CD4-positive, alpha-beta T cell (primary cell): ENCODE measurements at regions of chr6 and their contacts with region 1.

Region 1: GRCh38 chr6:3356056-3356761 is 97.5 kb downstream of the PSMG4 start:
- DNase-seq: peak; percentile 36 to 87 (median 58)
- ATAC-seq: peak; percentile 78
- H3K4me3 ChIP-seq: peak overlapping the region; percentile 50
- H3K4me3 Mint-ChIP-seq: peak overlapping the region; percentile 85
- H3K27ac ChIP-seq: peak overlapping the region; percentile 67 to 71
- H3K27ac Mint-ChIP-seq: peak overlapping the region; percentile 94
- H3K4me1 ChIP-seq: peaks cover 33% of the 10 kb centered on the region
- H3K4me1 Mint-ChIP-seq: peaks cover 47% of the 10 kb centered on the region
- H3K27me3 ChIP-seq: no peaks in the 10 kb centered on the region
- H3K27me3 Mint-ChIP-seq: no peaks in the 10 kb centered on the region
- CTCF ChIP-seq: no peak

Region 2: GRCh38 chr6:2245094-2245876 is 1110.9 kb before region 1 on chr6 and contains the start of gene GMDS:
- CTCF ChIA-PET with region 1: no interaction called
- POLR2A ChIA-PET with region 1: no interaction called
- intact Hi-C with region 1: loop called in 1 of 2 experiments (anchors 10 kb)
- DNase-seq: peak; percentile 60 to 95 (median 78)
- ATAC-seq: peak; percentile 88
- H3K4me3 ChIP-seq: peak within 1 kb of the TSS; percentile 97
- H3K4me3 Mint-ChIP-seq: peak within 1 kb of the TSS; percentile 94
- H3K27ac ChIP-seq: peak within 1 kb of the TSS; percentile 50 to 88
- H3K27ac Mint-ChIP-seq: peak within 1 kb of the TSS; percentile 96
- H3K4me1 ChIP-seq: peaks cover 29% of the 10 kb centered on the region
- H3K4me1 Mint-ChIP-seq: peaks cover 69% of the 10 kb centered on the region
- H3K27me3 ChIP-seq: no peaks in the 10 kb centered on the region
- H3K27me3 Mint-ChIP-seq: no peaks in the 10 kb centered on the region
- CTCF ChIP-seq: no peak
- total RNA-seq, gene GMDS: 13.9 to 16.4 TPM

Region 3: DNA sequence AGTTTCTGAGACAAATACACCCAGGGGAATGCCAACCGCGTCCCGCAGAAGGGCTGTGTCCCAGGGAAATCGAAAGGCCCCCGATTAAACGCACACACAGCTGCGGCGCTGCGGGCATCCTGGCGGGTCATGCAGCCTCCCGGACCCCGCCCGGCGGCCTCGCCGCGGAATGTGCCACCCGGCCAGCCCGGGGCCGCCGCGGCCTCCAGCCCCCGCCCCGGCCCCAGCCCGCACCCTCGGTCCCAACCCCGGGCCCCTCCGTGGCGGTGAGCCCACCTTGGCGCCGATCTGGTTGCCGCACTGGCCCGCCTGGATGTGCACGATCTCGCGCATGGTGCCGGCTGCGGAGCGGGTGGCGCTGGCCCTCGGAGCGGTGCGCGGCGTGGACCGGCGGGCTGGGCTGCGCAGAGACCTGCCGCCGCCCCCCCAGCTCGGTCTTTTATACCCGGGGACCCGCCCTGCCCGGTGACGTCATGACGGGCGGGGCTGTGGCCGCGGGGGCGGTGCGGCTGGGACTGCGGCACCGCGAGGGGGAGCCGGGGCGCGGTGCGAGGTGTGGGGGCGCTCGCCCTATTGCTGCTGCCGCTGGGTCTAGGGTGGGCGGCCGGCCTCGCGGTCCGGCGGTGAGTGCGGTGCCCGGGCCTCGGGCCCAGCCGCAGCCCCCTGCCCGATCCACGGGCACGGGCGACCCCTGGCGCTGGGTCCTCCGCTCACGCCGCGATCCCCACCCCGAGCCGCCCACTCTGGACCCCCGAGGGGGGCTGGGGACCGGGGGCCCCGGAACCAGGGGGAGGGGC is 198.9 kb before region 1 on chr6 and contains the start of gene TUBB2A:
- CTCF ChIA-PET with region 1: no interaction called
- POLR2A ChIA-PET with region 1: no interaction called
- intact Hi-C with region 1: loop called in 1 of 2 experiments (anchors 5 kb)
- DNase-seq: peak; percentile 79 to 94 (median 87)
- ATAC-seq: peak; percentile 62
- H3K4me3 ChIP-seq: peak within 1 kb of the TSS; percentile 75
- H3K4me3 Mint-ChIP-seq: peak within 1 kb of the TSS; percentile 91
- H3K27ac ChIP-seq: peak within 1 kb of the TSS; percentile 52 to 59
- H3K27ac Mint-ChIP-seq: peak within 1 kb of the TSS; percentile 87
- H3K4me1 ChIP-seq: peaks cover 46% of the 10 kb centered on the region
- H3K4me1 Mint-ChIP-seq: peaks cover 41% of the 10 kb centered on the region
- H3K27me3 ChIP-seq: no peaks in the 10 kb centered on the region
- H3K27me3 Mint-ChIP-seq: peaks cover 4% of the 10 kb centered on the region
- CTCF ChIP-seq: peak; percentile 42
- total RNA-seq, gene TUBB2A: 54.3 to 58.5 TPM

Region 4: DNA sequence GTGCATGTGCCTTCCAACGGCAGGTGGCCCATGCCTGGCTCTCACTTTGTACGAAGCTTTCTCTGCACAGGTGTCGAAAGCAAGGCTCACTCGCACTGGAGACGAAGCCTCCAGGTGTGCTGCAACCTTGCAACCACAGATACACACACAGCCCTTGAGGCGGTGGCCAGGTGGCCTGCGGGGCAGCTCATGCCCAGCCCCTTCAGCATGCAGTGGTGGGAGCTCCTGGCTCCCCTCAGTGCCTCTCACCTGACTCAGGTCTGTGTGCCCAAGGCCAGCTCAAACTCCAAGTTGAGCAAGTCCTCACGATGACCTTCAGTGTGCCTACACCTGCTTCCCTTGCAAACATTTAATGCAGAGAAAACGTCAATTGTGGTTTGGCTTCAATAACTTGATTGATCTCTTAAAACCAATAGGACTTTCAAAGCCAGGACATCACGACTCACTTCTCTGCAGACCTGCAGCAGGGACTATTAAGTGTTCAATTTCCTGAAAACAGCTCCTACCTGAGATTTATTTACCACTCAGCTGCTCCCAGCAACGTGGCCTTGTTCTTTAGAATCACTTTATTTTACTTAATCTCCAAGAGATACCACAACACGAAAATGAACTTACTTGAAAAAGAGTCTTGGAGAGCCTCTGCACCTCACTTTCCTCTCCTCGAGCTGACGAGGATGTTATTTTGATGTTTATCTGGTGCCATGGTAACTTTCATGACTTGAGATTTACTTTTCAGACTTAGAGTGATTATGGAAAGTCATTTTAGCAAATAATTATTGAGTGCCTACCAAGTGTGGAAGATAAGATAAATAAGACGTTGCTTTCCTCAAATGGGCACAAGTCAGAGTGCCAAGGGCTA is 14.4 kb after region 1 on chr6:
- CTCF ChIA-PET with region 1: no interaction called
- POLR2A ChIA-PET with region 1: interaction called, 4 read pairs
- intact Hi-C with region 1: loop called in 1 of 2 experiments (anchors 1 kb)
- DNase-seq: peak in 8 of 14 experiments; percentile 4 to 76 (median 28)
- ATAC-seq: peak; percentile 76
- H3K4me3 ChIP-seq: no peak overlapping the region
- H3K4me3 Mint-ChIP-seq: peak overlapping the region; percentile 3
- H3K27ac ChIP-seq: peak overlapping the region in 1 of 2 donors; percentile 67
- H3K27ac Mint-ChIP-seq: peak overlapping the region; percentile 85
- H3K4me1 ChIP-seq: peaks cover 25% of the 10 kb centered on the region
- H3K4me1 Mint-ChIP-seq: peaks cover 25% of the 10 kb centered on the region
- H3K27me3 ChIP-seq: no peaks in the 10 kb centered on the region
- H3K27me3 Mint-ChIP-seq: no peaks in the 10 kb centered on the region
- CTCF ChIP-seq: no peak

Region 5: DNA sequence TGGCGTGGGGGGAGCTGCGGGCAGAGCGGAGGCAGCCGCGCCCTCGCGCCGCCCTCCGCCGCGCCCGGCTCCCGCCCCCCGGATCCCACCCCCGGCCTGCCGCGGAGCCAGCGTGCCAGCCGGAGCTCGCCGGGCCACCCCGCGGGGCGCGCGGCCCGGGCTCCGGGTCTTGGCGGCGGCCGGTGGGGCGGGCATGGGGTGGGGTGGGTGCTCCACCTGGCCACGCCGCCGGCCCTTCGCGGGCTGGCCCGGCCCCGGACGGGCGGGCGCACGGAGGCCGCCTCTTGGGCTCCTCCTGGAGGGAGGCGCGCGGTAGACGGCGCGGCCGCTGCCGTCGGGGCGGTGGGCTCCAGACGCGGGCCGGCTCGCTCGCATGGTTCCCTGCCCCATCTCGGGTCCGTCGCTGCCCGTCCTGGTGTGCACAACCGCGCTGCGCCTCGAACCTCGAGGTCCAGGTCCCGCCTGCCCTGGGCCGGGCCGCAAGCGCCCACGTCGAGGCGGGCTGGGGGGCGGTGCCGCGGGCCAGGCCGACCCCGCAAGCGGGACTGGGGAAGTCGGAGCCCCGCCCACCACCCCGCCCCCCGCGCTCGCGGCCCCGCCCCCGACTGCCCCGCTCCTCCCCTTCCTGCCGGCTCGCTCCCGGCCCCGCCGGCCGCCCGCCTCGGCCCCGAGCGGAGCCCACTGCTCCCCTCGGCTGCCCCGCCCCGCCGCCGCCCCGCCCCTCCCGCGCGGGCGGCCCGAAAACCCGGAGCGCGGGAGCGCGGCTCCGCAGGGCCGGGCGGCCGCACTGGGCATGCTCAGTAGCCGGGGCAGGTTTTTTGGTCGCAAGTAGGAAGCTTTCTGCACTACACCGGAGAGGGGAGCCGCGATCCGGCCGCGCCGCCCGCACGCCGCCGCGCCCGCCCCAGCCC is 1419.6 kb after region 1 on chr6 and contains the start of gene CDYL:
- CTCF ChIA-PET with region 1: no interaction called
- POLR2A ChIA-PET with region 1: no interaction called
- intact Hi-C with region 1: loop called in 1 of 2 experiments (anchors 10 kb)
- DNase-seq: peak; percentile 73 to 95 (median 88)
- ATAC-seq: peak; percentile 73
- H3K4me3 ChIP-seq: peak within 1 kb of the TSS; percentile 81
- H3K4me3 Mint-ChIP-seq: peak within 1 kb of the TSS; percentile 98
- H3K27ac ChIP-seq: no peak within 1 kb of the TSS
- H3K27ac Mint-ChIP-seq: peak within 1 kb of the TSS; percentile 87
- H3K4me1 ChIP-seq: peaks cover 18% of the 10 kb centered on the region
- H3K4me1 Mint-ChIP-seq: peaks cover 46% of the 10 kb centered on the region
- H3K27me3 ChIP-seq: no peaks in the 10 kb centered on the region
- H3K27me3 Mint-ChIP-seq: no peaks in the 10 kb centered on the region
- CTCF ChIP-seq: no peak
- total RNA-seq, gene CDYL: 23.8 to 23.9 TPM